ENCODE measurements at regions of chrX and their contacts with region 1.

Region 1: GRCh38 chrX:118847676-118848075 is 24.1 kb downstream of the ZCCHC12 start:
- DNase-seq: no peak
- ATAC-seq: peak; percentile 40 to 81 (median 66)
- H3K4me3 ChIP-seq: no peak overlapping the region
- H3K27ac ChIP-seq: no peak overlapping the region
- H3K4me1 ChIP-seq: no peaks in the 10 kb centered on the region
- H3K27me3 ChIP-seq: no peaks in the 10 kb centered on the region
- CTCF ChIP-seq: peak; percentile 74

Region 2: DNA sequence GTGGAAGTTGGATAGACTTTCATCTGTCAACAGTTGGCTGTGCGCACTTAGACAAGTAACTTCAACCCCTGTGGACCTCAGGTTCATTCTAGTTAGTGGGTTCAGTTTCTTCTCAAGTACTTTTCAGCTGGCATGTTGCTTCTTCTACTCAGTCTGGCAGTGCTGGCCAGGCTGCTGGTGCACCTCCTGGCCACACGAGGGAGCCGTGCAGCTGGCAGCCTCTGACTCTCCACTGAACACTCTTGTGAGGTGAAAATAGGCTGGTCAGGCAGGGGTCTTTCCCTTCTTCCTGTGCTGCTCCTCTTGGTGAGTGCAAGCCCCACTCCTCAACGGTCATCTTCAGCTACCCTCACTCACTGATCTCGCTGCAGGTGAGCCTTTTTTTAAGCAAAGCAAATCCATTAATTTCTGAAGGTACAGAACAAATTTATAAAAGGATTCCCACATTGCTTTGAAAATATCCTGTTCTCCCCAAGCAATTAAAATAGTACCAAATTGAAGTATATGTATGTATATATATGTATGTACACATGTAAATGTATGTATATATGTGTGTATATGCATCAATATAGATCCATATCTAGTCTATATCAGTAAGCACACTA is 157.3 kb after region 1 on chrX:
- intact Hi-C with region 1: loop called (anchors 5 kb)
- DNase-seq: peak; percentile 47 to 74
- ATAC-seq: peak; percentile 75 to 88 (median 83)
- H3K4me3 ChIP-seq: no peak overlapping the region
- H3K27ac ChIP-seq: no peak overlapping the region
- H3K4me1 ChIP-seq: no peaks in the 10 kb centered on the region
- H3K27me3 ChIP-seq: no peaks in the 10 kb centered on the region
- CTCF ChIP-seq: peak; percentile 82

Region 3: GRCh38 chrX:119013164-119013563 is 165.5 kb after region 1 on chrX:
- intact Hi-C with region 1: loop called (anchors 5 kb)
- DNase-seq: no peak
- ATAC-seq: no peak
- H3K4me3 ChIP-seq: no peak overlapping the region
- H3K27ac ChIP-seq: no peak overlapping the region
- H3K4me1 ChIP-seq: no peaks in the 10 kb centered on the region
- H3K27me3 ChIP-seq: no peaks in the 10 kb centered on the region
- CTCF ChIP-seq: no peak

Region 4: DNA sequence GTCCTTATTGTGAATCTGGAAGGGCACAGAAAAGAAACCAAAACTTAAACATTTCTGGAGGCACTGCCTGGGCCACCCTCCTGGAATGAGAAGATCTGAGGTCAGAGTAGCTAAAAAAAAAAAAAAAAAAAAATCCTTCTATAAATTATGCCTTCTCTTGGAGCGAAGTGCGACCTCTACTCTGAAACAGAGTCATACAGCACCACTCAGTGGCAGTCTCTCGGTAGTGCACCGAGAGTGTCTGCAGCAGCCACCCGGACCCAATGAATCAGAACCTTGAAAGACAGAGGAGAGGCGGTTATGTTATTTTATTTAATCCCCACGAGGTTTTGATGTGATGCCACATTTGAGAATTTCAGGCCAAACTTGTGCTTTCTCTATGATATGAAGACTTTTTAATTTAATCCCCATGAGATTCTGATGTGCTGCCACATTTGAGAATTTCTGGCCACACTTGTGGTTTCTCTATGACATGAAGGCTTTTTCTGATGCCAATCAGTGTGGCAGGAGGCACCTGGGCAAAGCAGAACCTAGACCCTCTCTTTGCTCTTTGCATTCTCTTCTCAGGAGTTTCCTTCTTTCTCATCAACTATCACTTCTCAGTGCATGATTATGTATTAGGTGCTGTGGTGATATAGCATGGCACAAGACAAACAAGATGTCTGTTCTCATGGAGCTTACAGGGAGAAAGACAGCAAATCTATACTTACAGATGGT is 219.5 kb after region 1 on chrX:
- intact Hi-C with region 1: loop called in 1 of 2 experiments (anchors 5 kb)
- DNase-seq: peak; percentile 49 to 60
- ATAC-seq: peak; percentile 68 to 85 (median 74)
- H3K4me3 ChIP-seq: no peak overlapping the region
- H3K27ac ChIP-seq: no peak overlapping the region
- H3K4me1 ChIP-seq: no peaks in the 10 kb centered on the region
- H3K27me3 ChIP-seq: no peaks in the 10 kb centered on the region
- CTCF ChIP-seq: peak; percentile 70

Measured in psoas muscle (tissue), 8 donors.